ENCODE measurements at regions of chr6 and their contacts with region 1.

Region 1: GRCh38 chr6:14059791-14060444 is 57.7 kb upstream of the CD83 start:
- DNase-seq: no peak
- H3K4me3 ChIP-seq: no peak overlapping the region
- CTCF ChIP-seq: no peak

Region 2: DNA sequence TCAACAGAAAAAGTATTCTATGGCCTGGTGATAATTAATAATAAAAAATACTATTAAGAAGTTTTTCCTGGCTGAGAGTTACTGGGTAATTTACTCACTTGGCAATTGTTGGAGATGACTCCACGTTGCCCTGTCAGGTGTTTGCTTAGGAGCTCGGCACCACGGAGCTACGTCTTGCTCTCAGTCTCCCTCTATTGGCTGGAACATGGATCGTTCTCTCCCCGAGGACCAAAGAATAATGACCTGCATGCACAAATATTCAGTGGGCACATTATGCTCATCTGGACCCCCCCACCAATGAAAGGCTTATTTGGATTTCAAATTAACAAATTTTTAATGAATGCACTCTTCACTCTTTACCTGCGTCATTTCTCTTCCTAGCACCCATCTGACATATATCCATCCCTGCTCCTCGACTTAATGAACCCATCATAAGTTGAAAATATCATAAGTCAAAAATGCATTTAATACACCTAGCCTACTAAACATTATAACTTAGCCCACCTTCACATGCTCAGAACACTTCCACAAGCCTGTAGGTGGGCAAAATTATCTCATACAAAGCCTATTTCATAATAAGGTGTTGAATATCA is 13.3 kb before region 1 on chr6:
- CTCF ChIA-PET with region 1: interaction called, 183 read pairs
- POLR2A ChIA-PET with region 1: no interaction called
- DNase-seq: no peak
- H3K4me3 ChIP-seq: no peak overlapping the region
- CTCF ChIP-seq: peak; percentile 82

Region 3: DNA sequence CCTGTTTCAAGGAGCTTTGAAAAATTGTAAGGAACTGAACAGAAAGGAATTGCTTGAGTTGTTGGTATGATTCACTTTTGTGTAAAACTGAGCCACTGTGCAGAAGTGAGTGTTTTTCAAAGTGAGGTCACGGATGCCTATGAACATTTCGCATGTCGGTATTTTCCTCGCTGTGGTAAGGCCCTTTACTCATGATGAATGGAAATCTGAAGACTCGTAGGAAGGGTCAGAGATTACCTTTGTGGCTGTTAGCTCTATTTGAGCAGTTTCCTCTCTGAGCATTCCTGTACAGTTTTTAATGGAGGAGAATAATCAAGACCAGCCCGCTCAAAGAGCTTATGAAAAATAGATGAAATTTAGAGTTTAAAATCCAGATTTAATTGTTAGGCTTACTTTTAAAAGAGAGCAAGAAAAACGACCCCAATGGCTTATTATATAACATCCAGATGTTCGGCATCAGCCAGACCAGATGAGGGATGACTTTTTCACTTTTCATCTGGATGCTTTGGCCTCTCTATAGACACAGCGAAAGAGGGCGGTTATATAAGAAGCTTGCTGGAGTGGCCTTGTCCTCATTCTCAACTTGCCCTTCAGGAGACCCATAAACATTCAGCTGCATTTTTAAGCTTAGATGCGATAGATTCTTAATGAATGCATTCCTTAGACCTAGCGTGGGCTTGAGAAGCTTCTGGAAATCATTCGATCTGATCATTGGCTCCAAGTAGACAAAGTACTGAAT is 157.2 kb after region 1 on chr6:
- CTCF ChIA-PET with region 1: no interaction called
- POLR2A ChIA-PET with region 1: no interaction called
- DNase-seq: no peak
- H3K4me3 ChIP-seq: no peak overlapping the region
- CTCF ChIP-seq: no peak